Activated CD4-positive, alpha-beta memory T cell treated with anti-CD3 and anti-CD28 coated beads, Interleukin-2, amount 10 ng/mL, durations not matched to agents 7 days and 5 days (primary cell): ENCODE measurements at regions of chr1 and their contacts with region 1.

Region 1: GRCh38 chr1:204565617-204566582 is 49.7 kb downstream of the MDM4 start:
- DNase-seq: peak; percentile 67
- H3K4me3 Mint-ChIP-seq: no peak overlapping the region
- H3K27ac Mint-ChIP-seq: peak overlapping the region; percentile 73
- H3K4me1 Mint-ChIP-seq: peaks cover 51% of the 10 kb centered on the region
- H3K27me3 Mint-ChIP-seq: no peaks in the 10 kb centered on the region

Region 2: GRCh38 chr1:204516180-204516879 is 49.6 kb before region 1 on chr1 and contains the start of gene MDM4:
- CTCF ChIA-PET with region 1: interaction called, 8 read pairs
- POLR2A ChIA-PET with region 1: interaction called, 22 read pairs
- DNase-seq: peak; percentile 95
- H3K4me3 Mint-ChIP-seq: no peak within 1 kb of the TSS
- H3K27ac Mint-ChIP-seq: no peak within 1 kb of the TSS
- H3K4me1 Mint-ChIP-seq: peaks cover 64% of the 10 kb centered on the region
- H3K27me3 Mint-ChIP-seq: no peaks in the 10 kb centered on the region
- total RNA-seq, gene MDM4: 85.1 to 95.4 TPM

Region 3: GRCh38 chr1:204544321-204544720 is 21.6 kb before region 1 on chr1:
- CTCF ChIA-PET with region 1: interaction called, 10 read pairs
- POLR2A ChIA-PET with region 1: interaction called, 4 read pairs
- DNase-seq: no peak
- H3K4me3 Mint-ChIP-seq: peak overlapping the region; percentile 33
- H3K27ac Mint-ChIP-seq: peak overlapping the region; percentile 86
- H3K4me1 Mint-ChIP-seq: peaks cover 54% of the 10 kb centered on the region
- H3K27me3 Mint-ChIP-seq: no peaks in the 10 kb centered on the region

Region 4: DNA sequence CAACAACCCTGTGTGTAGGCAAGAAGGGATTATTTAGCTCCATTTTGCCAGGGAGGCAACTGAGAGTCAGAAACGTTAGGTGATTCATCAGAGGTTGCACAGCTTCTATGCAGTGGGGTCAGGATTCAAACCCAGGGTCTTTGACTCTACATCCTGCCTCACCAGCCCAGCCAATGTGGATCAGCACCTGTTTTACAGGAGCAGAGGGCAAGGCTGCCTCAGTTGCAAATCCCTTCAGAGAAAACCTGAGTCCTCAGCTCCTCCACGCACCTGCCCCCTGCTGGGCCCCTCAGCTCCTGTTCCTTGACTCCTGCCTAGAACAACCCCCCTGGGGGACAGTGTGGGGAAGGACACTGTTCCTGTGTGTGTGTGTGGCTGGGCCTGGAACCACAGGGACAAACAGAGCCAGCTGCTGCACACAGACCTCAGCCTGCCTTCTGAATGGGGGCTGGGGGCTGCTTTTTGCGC is 58.0 kb after region 1 on chr1:
- CTCF ChIA-PET with region 1: interaction called, 17 read pairs
- POLR2A ChIA-PET with region 1: interaction called, 3 read pairs
- DNase-seq: peak; percentile 24
- H3K4me3 Mint-ChIP-seq: no peak overlapping the region
- H3K27ac Mint-ChIP-seq: no peak overlapping the region
- H3K4me1 Mint-ChIP-seq: no peaks in the 10 kb centered on the region
- H3K27me3 Mint-ChIP-seq: no peaks in the 10 kb centered on the region

Region 5: DNA sequence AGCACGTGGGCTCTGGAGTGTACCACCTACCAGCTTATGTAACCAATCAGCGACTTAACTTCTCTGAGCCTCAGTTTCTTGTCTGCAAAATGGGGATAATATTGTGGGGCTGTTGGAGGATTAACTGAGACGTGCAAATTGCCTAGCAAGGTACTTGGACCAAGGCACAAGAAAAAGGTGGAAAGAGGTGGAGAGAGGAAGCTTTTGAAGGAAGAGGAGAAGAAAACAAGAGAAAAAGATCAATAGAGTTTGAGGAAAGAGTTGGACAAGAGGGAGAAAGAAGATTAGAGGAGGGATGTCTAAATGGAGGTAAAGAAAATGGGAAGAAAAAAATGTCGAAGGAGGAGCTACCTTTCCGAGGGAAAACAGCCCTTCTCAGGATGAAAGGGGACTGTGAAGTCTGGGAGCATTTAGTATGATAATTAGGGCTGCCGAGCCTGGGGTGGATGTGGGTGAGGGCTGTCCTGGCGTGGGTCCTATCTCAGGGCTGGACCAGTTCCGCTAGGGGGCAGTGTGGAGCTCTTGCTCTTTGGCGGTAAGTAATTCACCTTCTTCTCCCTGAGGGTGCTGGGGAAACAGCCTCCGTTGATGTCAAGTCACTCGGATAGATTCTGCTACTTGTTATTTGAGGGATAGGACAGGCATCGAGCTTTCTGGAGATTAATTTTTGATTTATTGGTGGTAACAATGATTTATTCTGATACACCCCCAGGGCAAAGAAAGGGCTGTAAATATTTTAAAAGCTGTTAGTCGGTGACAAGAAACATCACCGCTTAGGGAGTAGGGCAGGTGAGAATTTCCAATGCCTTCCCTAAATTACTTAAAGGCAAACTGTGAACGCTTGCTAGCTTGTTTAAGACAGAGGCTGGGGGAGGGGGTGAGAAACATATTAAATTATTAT is 225.8 kb after region 1 on chr1:
- CTCF ChIA-PET with region 1: interaction called, 13 read pairs
- POLR2A ChIA-PET with region 1: no interaction called
- DNase-seq: peak; percentile 80
- H3K4me3 Mint-ChIP-seq: no peak overlapping the region
- H3K27ac Mint-ChIP-seq: no peak overlapping the region
- H3K4me1 Mint-ChIP-seq: no peaks in the 10 kb centered on the region
- H3K27me3 Mint-ChIP-seq: peaks cover 32% of the 10 kb centered on the region